PC-3 (cell line): ENCODE measurements at regions of chr18 and their contacts with region 1.

Region 1: GRCh38 chr18:21303913-21304312 is 61.9 kb downstream of the GREB1L start:
- DNase-seq: peak; percentile 44
- ATAC-seq: peak; percentile 42
- H3K4me3 ChIP-seq: no peak overlapping the region
- H3K27ac ChIP-seq: no peak overlapping the region
- H3K4me1 ChIP-seq: peaks cover 23% of the 10 kb centered on the region
- H3K27me3 ChIP-seq: no peaks in the 10 kb centered on the region
- CTCF ChIP-seq: no peak

Region 2: DNA sequence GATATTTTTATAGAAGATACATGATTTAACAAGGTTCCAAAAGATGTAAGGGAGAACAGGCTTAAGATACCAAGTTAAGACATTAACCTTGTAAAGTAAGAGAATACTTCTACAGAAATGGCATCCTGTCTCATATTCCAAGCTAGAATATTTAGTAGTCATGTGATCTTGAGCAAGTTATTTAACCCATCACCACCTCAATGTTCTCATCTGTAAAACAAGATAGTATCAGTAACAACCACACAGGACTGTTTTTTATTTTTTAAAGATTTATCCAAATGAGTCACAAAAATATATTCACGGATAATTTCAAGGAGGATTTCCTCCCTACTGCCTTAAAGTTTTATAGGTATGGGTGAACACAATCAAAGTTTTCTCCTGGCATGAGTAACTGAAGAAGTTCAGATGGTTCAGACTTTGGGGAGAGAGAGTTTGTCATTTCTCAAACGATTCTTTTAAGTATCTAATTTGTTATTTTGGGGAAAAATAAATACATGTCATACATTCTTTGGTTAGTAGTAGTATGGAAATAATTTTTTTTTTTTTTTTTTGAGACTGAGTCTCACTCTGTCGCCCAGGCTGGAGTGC is 218.2 kb before region 1 on chr18:
- CTCF ChIA-PET with region 1: no interaction called
- POLR2A ChIA-PET with region 1: no interaction called
- intact Hi-C with region 1: no loop called
- DNase-seq: peak; percentile 31
- ATAC-seq: peak; percentile 64
- H3K4me3 ChIP-seq: no peak overlapping the region
- H3K27ac ChIP-seq: no peak overlapping the region
- H3K4me1 ChIP-seq: peaks cover 4% of the 10 kb centered on the region; the same call in 1 of the 2 replicates
- H3K27me3 ChIP-seq: no peaks in the 10 kb centered on the region
- CTCF ChIP-seq: no peak

Region 3: GRCh38 chr18:21194871-21195771 is 108.8 kb before region 1 on chr18:
- CTCF ChIA-PET with region 1: no interaction called
- POLR2A ChIA-PET with region 1: no interaction called
- intact Hi-C with region 1: no loop called
- DNase-seq: peak; percentile 69
- ATAC-seq: peak; percentile 85
- H3K4me3 ChIP-seq: no peak overlapping the region
- H3K27ac ChIP-seq: no peak overlapping the region
- H3K4me1 ChIP-seq: peaks cover 10% of the 10 kb centered on the region
- H3K27me3 ChIP-seq: no peaks in the 10 kb centered on the region
- CTCF ChIP-seq: peak; percentile 94

Region 4: GRCh38 chr18:21257386-21257785 is 46.5 kb before region 1 on chr18:
- CTCF ChIA-PET with region 1: no interaction called
- POLR2A ChIA-PET with region 1: no interaction called
- intact Hi-C with region 1: loop called (anchors 10 kb)
- DNase-seq: peak; percentile 26
- ATAC-seq: peak; percentile 45
- H3K4me3 ChIP-seq: no peak overlapping the region
- H3K27ac ChIP-seq: no peak overlapping the region
- H3K4me1 ChIP-seq: peaks cover 4% of the 10 kb centered on the region; the same call in 1 of the 2 replicates
- H3K27me3 ChIP-seq: no peaks in the 10 kb centered on the region
- CTCF ChIP-seq: no peak